Right cardiac atrium (tissue), 5 donors: ENCODE measurements at regions of chr13 and their contacts with region 1.

Region 1: DNA sequence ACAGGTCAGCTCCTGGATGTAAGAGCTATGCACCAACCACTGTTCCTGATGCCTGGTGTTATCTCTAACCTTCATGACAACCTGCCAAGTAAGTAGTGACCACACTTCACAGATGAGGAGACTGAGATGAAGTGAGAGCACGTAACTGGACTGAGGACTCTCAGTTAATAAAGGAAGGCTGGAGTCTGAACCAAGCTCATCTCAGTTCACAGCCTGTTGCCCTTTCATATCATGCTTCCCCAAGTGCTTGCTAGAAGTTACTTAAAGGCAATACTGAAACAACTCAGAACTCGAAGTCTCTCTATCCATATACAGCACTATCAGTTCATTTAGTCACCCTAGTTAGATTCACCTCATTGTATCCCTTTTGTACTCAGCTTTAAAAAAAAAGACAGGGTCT is 119.7 kb downstream of the ABCC4 start:
- DNase-seq: no peak
- ATAC-seq: peak in 1 of 2 donors; percentile 23
- H3K4me3 ChIP-seq: no peak overlapping the region
- H3K27ac ChIP-seq: no peak overlapping the region
- H3K4me1 ChIP-seq: peaks cover 2% of the 10 kb centered on the region
- H3K27me3 ChIP-seq: no peaks in the 10 kb centered on the region

Region 2: DNA sequence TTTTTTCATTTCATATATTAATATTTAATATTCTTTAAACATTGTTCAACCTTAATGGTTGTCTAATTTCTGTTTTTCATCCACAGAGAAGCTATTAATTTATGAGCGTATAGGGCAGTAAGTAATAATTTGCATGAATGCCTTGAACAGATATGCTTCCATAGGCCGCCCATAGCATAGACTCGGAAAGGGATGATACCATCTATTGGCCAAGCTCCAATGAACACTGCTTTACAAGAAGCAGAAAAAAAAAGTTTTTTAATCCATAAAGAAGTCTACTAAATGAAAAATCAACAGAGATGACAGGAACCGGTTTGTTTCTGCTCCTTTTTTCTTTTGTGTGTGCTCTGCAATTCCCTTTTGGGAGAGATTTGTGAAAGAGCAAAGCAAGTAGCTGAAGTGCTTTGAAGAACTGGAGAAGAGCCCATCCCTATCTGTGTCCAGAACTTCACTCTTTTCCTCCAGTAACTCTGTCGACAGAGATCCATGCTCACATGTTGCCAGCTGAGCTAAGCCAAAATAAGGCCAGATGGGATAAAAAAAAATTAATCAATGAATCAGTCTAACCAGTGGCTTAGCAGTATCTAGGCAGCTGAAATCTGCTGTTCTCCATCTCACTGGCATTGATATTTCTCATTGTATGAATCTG is 253.3 kb before region 1 on chr13:
- intact Hi-C with region 1: no loop called
- DNase-seq: no peak
- ATAC-seq: no peak
- H3K4me3 ChIP-seq: no peak overlapping the region
- H3K27ac ChIP-seq: no peak overlapping the region
- H3K4me1 ChIP-seq: no peaks in the 10 kb centered on the region
- H3K27me3 ChIP-seq: no peaks in the 10 kb centered on the region

Region 3: DNA sequence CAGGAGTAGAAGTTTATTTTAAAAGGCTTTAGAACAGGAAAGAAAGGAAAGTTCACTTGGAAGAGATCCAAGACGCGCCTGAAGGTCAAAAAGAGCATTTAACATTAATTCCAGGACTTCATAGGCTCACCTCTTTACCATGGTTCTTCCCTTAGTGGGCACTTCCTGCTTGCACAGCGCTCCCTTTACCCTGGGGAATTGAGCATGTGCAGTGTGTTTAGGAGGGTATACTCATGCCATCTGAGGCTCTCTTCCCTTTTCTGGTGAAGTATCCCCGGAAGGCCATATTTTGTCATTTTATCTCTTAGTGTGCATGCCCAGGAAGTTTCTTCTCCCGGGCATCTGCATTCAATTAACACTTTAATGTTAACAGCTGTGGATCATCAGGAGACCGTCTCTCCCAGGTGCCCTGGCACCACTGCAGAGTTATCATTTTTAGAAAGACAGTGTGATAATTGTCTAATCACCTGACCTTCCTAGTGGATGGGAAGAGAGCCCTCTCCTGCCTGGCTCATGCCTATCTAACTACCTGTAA is 185.8 kb after region 1 on chr13:
- intact Hi-C with region 1: no loop called
- DNase-seq: no peak
- ATAC-seq: no peak
- H3K4me3 ChIP-seq: no peak overlapping the region
- H3K27ac ChIP-seq: no peak overlapping the region
- H3K4me1 ChIP-seq: no peaks in the 10 kb centered on the region
- H3K27me3 ChIP-seq: no peaks in the 10 kb centered on the region

Region 4: GRCh38 chr13:95382411-95382810 is 200.8 kb after region 1 on chr13:
- intact Hi-C with region 1: loop called in 1 of 4 experiments (anchors 5 kb)
- DNase-seq: no peak
- ATAC-seq: no peak
- H3K4me3 ChIP-seq: no peak overlapping the region
- H3K27ac ChIP-seq: no peak overlapping the region
- H3K4me1 ChIP-seq: peaks cover 2% of the 10 kb centered on the region
- H3K27me3 ChIP-seq: no peaks in the 10 kb centered on the region

Region 5: GRCh38 chr13:95479731-95480130 is 298.1 kb after region 1 on chr13:
- intact Hi-C with region 1: loop called in 1 of 4 experiments (anchors 10 kb)
- DNase-seq: no peak
- ATAC-seq: no peak
- H3K4me3 ChIP-seq: no peak overlapping the region
- H3K27ac ChIP-seq: no peak overlapping the region
- H3K4me1 ChIP-seq: no peaks in the 10 kb centered on the region
- H3K27me3 ChIP-seq: no peaks in the 10 kb centered on the region

Region 6: GRCh38 chr13:95714142-95714829 is 532.7 kb after region 1 on chr13:
- intact Hi-C with region 1: no loop called
- DNase-seq: no peak
- ATAC-seq: no peak
- H3K4me3 ChIP-seq: no peak overlapping the region
- H3K27ac ChIP-seq: no peak overlapping the region
- H3K4me1 ChIP-seq: no peaks in the 10 kb centered on the region
- H3K27me3 ChIP-seq: no peaks in the 10 kb centered on the region

Region 7: DNA sequence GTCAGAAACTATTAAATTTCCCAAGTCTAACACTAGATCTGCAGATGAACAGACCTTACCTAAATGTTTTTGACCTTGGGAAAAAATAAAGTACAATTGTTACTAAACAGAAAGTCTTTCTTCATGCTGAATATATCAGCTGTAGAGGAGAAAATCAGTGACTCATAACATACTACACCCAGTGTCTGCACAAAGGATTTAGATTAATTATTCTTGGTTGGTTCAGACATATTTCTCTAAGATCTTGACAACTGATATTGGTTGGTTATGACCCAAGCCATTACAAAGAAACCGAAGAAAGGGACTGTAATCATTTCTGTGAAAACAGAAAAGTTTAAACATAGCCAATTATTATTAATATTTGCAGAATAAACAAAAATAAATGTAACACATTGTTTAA is 1133.4 kb after region 1 on chr13:
- intact Hi-C with region 1: no loop called
- DNase-seq: no peak
- ATAC-seq: no peak
- H3K4me3 ChIP-seq: no peak overlapping the region
- H3K27ac ChIP-seq: no peak overlapping the region
- H3K4me1 ChIP-seq: no peaks in the 10 kb centered on the region
- H3K27me3 ChIP-seq: no peaks in the 10 kb centered on the region